Activated CD4-positive, alpha-beta memory T cell treated with anti-CD3 and anti-CD28 coated beads, Interleukin-2, amount 10 ng/mL, durations not matched to agents 7 days and 5 days (primary cell): ENCODE measurements at regions of chr15 and their contacts with region 1.

Region 1: GRCh38 chr15:94230956-94231722 is at the start of gene MCTP2:
- DNase-seq: peak; percentile 90
- H3K4me3 Mint-ChIP-seq: peak within 1 kb of the TSS; percentile 87
- H3K27ac Mint-ChIP-seq: peak within 1 kb of the TSS; percentile 98
- H3K4me1 Mint-ChIP-seq: peaks cover 69% of the 10 kb centered on the region
- H3K27me3 Mint-ChIP-seq: peaks cover 2% of the 10 kb centered on the region
- total RNA-seq, gene MCTP2: 46.7 to 48.7 TPM

Region 2: GRCh38 chr15:94163999-94164807 is 66.9 kb before region 1 on chr15:
- CTCF ChIA-PET with region 1: interaction called, 41 read pairs
- POLR2A ChIA-PET with region 1: interaction called, 4 read pairs
- DNase-seq: peak; percentile 69
- H3K4me3 Mint-ChIP-seq: no peak overlapping the region
- H3K27ac Mint-ChIP-seq: no peak overlapping the region
- H3K4me1 Mint-ChIP-seq: peaks cover 9% of the 10 kb centered on the region
- H3K27me3 Mint-ChIP-seq: peaks cover 11% of the 10 kb centered on the region

Region 3: GRCh38 chr15:94263341-94264273 is 32.5 kb after region 1 on chr15:
- CTCF ChIA-PET with region 1: no interaction called
- POLR2A ChIA-PET with region 1: interaction called, 13 read pairs
- DNase-seq: no peak
- H3K4me3 Mint-ChIP-seq: no peak overlapping the region
- H3K27ac Mint-ChIP-seq: no peak overlapping the region
- H3K4me1 Mint-ChIP-seq: peaks cover 41% of the 10 kb centered on the region
- H3K27me3 Mint-ChIP-seq: no peaks in the 10 kb centered on the region

Region 4: DNA sequence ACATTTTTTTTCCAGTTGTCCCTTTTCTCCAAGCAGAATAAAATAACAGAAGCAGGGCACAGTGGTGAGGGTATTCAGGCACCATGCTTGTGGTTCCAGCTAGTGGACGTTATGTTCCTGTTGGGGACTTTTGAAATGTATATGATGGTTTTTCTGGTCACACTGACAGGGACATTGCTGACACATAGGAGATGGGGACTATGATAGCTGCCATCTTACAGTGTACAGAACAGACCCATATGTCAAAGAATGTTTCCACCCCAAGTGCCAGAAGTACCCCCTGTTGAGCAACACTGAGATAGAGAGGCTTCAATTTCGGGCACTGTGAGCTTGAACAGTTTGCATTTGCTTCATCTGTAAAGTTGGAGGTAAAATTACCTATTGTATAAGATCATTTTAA is 38.8 kb after region 1 on chr15:
- CTCF ChIA-PET with region 1: interaction called, 3 read pairs
- POLR2A ChIA-PET with region 1: interaction called, 13 read pairs
- DNase-seq: no peak
- H3K4me3 Mint-ChIP-seq: no peak overlapping the region
- H3K27ac Mint-ChIP-seq: no peak overlapping the region
- H3K4me1 Mint-ChIP-seq: peaks cover 30% of the 10 kb centered on the region
- H3K27me3 Mint-ChIP-seq: no peaks in the 10 kb centered on the region

Region 5: GRCh38 chr15:94287794-94288246 is 56.7 kb after region 1 on chr15:
- CTCF ChIA-PET with region 1: interaction called, 14 read pairs
- POLR2A ChIA-PET with region 1: interaction called, 56 read pairs
- DNase-seq: peak; percentile 74
- H3K4me3 Mint-ChIP-seq: peak overlapping the region; percentile 63
- H3K27ac Mint-ChIP-seq: peak overlapping the region; percentile 85
- H3K4me1 Mint-ChIP-seq: peaks cover 51% of the 10 kb centered on the region
- H3K27me3 Mint-ChIP-seq: no peaks in the 10 kb centered on the region

Region 6: GRCh38 chr15:94306700-94307650 is 75.8 kb after region 1 on chr15:
- CTCF ChIA-PET with region 1: interaction called, 18 read pairs
- POLR2A ChIA-PET with region 1: interaction called, 27 read pairs
- DNase-seq: no peak
- H3K4me3 Mint-ChIP-seq: peak overlapping the region; percentile 15
- H3K27ac Mint-ChIP-seq: peak overlapping the region; percentile 83
- H3K4me1 Mint-ChIP-seq: peaks cover 62% of the 10 kb centered on the region
- H3K27me3 Mint-ChIP-seq: no peaks in the 10 kb centered on the region

Region 7: DNA sequence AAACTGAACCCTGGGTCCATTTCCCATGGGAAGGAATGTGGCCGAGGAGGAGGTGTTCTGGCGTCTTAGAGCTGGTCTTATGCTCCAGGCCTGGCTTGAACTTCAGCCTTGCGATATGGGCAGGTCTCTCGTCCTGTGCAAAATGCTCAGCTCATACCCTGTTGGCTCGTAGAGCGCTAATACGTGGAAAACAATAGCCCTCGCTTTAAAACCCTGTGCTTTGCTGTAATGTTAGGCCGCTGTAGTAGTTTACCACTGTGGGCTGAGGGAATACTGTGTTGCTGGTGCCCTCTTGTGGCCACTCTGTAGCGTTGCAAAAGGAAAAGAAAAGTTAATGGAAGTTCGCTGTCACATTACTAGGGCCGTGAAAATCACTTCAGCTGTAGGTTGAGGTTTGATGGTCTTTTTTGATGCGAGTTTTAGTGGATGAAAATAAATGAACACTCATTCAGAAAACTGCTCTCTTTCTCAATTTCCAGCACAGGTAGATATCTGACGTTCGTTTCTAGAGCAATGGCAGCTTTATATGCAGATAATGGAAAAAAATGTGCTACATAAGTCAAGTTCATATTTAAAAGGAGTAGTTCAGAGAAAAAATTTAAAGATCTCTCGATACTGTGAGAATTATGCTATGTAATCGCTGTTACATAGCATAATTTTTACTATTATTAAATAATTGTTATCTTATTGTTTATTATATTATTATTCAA is 93.1 kb after region 1 on chr15:
- CTCF ChIA-PET with region 1: interaction called, 72 read pairs
- POLR2A ChIA-PET with region 1: interaction called, 31 read pairs
- DNase-seq: peak; percentile 67
- H3K4me3 Mint-ChIP-seq: no peak overlapping the region
- H3K27ac Mint-ChIP-seq: no peak overlapping the region
- H3K4me1 Mint-ChIP-seq: peaks cover 23% of the 10 kb centered on the region
- H3K27me3 Mint-ChIP-seq: no peaks in the 10 kb centered on the region